Ascending aorta (tissue), 2 donors: ENCODE measurements at regions of chr7 and their contacts with region 1.

Region 1: GRCh38 chr7:138002096-138002827 is 376 bp upstream of the CREB3L2 start:
- DNase-seq: peak; percentile 98 to 100
- H3K4me3 ChIP-seq: peak overlapping the region; percentile 71 to 73
- H3K27ac ChIP-seq: peak overlapping the region; percentile 83 to 95
- H3K4me1 ChIP-seq: peaks cover 0 to 11% of the 10 kb centered on the region in 2 donors
- H3K27me3 ChIP-seq: no peaks in the 10 kb centered on the region
- CTCF ChIP-seq: peak; percentile 85 to 95 (median 92)

Region 2: DNA sequence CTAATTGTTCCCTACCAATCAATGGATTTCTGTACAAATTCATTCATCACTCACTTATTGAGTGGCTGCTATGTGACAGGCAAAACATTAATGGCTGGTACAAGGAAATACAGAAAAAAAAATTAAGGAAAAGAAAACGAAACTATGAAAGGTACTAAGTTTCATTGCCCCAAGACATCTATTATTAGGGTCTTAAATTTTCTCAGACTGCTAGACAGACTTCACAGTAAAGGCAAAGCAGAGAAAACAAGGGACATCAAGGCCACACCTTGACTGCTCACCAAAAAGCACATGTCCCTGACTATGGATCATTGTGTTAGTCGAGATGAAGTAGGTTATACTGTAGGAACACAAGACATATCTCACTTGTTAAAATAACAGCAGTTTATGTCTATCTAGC is 192.0 kb before region 1 on chr7:
- intact Hi-C with region 1: no loop called
- DNase-seq: no peak
- H3K4me3 ChIP-seq: no peak overlapping the region
- H3K27ac ChIP-seq: no peak overlapping the region
- H3K4me1 ChIP-seq: no peaks in the 10 kb centered on the region
- H3K27me3 ChIP-seq: no peaks in the 10 kb centered on the region
- CTCF ChIP-seq: no peak

Region 3: DNA sequence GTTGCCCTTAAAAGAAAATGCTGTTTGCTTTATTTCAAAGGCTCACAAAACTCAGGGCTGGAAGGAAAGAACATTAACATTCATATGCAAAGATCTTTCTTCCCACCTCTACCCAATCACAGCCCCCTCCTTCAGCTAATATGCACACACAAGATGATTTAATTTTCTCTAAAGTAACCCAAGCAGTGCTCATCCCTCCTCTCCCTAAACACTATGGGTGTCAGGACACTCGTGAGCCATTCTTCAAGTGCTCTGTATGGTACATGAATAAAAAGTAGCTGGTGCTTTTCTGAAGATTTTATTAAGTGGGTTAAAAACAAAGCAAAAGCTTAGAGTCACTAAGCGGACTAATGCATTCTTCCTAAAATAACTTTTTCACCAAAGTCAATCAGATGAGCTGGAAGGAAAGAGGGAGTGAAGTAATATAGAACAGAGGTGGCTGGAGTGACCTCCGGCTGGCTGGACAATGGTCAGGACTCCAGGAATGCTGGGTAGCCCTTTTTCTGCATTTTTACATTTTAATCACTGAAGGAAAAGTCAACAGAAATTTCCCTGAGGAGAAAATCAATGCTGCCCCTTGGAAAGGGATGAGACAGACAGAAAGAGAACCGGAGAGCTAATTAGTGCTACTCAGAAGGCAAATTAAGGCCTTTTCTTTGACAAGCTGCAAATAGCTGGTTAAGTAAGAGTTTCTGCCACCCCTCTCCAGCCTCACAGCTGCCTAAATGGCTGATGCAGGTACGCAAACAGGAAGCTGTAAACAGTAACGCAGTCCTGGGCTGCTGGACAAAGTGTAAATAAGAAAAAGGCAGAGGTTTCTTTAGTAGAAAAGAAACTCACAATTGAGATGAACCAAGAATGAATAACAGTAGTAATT is 162.1 kb before region 1 on chr7:
- intact Hi-C with region 1: loop called (anchors 5 kb)
- DNase-seq: no peak
- H3K4me3 ChIP-seq: no peak overlapping the region
- H3K27ac ChIP-seq: peak overlapping the region; percentile 3 to 56
- H3K4me1 ChIP-seq: peaks cover 7 to 28% of the 10 kb centered on the region in 2 donors
- H3K27me3 ChIP-seq: no peaks in the 10 kb centered on the region
- CTCF ChIP-seq: no peak

Region 4: GRCh38 chr7:137909037-137909436 is 93.2 kb before region 1 on chr7:
- intact Hi-C with region 1: loop called (anchors 1 kb)
- DNase-seq: peak in 1 of 2 donors; percentile 84
- H3K4me3 ChIP-seq: peak overlapping the region in 1 of 2 donors; percentile 11
- H3K27ac ChIP-seq: peak overlapping the region; percentile 78 to 87
- H3K4me1 ChIP-seq: peaks cover 0 to 20% of the 10 kb centered on the region in 2 donors
- H3K27me3 ChIP-seq: no peaks in the 10 kb centered on the region
- CTCF ChIP-seq: peak in 2 of 3 experiments; percentile 18 to 37

Region 5: GRCh38 chr7:137933270-137934017 is 68.8 kb before region 1 on chr7:
- intact Hi-C with region 1: loop called (anchors 2 kb)
- DNase-seq: peak in 1 of 2 donors; percentile 86
- H3K4me3 ChIP-seq: peak overlapping the region in 1 of 2 donors; percentile 11
- H3K27ac ChIP-seq: peak overlapping the region; percentile 77 to 79
- H3K4me1 ChIP-seq: peaks cover 13 to 62% of the 10 kb centered on the region in 2 donors
- H3K27me3 ChIP-seq: no peaks in the 10 kb centered on the region
- CTCF ChIP-seq: no peak

Region 6: DNA sequence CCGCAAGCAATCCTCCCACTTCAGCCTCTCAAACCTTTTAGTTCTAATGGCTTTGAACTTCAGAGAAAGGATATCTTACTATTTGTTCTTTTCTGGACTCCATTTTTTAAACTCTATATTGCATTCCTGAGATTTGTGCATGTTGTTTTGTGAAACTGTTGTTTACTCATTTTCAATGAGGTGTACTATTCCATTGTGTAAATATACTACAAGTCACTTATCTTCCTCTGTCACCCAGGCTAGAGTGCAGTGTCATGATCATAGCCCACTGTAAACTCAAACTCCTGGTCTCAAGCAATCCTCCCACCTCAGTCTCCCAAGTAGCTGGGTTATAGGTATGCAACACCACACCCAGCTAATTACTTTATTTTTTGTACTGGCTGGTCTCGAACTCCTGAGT is 42.6 kb after region 1 on chr7:
- intact Hi-C with region 1: no loop called
- DNase-seq: no peak
- H3K4me3 ChIP-seq: no peak overlapping the region
- H3K27ac ChIP-seq: no peak overlapping the region
- H3K4me1 ChIP-seq: no peaks in the 10 kb centered on the region
- H3K27me3 ChIP-seq: no peaks in the 10 kb centered on the region
- CTCF ChIP-seq: no peak

Region 7: DNA sequence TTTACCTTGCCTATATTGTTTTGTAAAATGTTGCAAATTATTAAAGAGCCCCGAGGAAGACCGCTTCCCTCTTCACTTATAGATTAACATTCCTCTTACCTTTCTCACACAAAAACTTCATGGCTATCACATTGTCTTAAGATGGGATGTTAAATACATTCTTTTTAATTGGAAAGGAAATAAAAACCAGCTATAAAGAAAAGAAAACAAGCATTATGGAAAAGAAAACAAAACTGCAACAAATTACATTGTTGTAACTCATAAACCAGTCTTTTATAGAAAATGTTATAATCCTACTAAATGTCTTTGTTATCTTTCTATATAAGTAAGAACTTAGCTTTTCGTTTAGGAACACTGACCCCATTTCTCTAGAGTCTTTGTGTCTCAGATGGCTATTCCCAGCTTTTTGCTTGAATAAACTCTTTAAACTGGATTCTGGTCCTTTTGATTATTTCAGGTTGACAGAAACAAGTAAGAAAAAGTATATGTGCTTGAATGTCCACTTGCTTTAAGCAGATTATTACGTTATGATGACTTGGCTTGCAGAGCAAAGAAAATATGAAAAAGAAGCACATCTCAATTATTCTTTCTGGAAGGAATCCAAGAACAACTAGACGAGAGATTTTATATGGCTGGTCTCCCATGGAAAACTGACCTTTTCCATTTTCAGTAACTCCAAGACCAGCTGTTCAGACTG is 202.2 kb after region 1 on chr7:
- intact Hi-C with region 1: no loop called
- DNase-seq: no peak
- H3K4me3 ChIP-seq: no peak overlapping the region
- H3K27ac ChIP-seq: no peak overlapping the region
- H3K4me1 ChIP-seq: no peaks in the 10 kb centered on the region
- H3K27me3 ChIP-seq: no peaks in the 10 kb centered on the region
- CTCF ChIP-seq: no peak

Region 8: DNA sequence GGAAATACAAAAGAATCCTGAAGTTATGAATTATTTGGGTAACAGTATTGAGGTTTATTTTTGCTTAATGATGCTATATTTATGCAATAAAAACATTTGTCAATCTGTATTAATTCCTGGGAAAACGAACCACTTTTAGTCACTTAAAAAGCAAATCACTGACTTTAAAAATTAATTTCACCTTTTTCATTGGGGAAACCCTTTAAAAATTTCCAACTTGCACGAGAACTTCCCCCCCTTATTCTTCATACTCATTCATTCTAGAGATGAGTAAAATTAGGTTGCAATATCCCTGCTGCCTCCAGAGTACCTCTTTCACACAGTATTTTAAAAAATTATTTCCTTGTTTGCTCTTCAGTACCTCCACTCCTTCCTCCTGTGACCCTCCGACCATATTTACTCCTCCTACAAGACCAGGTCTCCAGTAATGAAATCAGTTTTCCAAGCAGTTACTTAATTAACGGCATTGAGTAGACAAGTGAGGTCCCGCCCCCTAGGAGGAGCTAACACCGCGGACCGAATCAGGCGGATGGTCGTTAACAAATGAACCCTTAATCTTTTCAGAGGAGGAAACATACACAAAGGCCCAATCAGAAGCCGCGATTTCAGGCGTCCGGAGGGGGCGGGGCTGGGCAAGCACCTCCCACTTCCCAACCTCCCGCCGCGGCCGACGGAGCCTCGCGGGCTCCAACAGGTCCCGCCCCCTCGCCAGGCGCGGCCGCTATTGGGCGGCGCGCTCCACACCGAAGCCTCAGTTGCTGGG is 457.3 kb after region 1 on chr7:
- intact Hi-C with region 1: loop called (anchors 10 kb)
- DNase-seq: peak; percentile 93 to 99
- H3K4me3 ChIP-seq: peak overlapping the region; percentile 57 to 85
- H3K27ac ChIP-seq: no peak overlapping the region
- H3K4me1 ChIP-seq: peaks cover 3 to 5% of the 10 kb centered on the region in 2 donors
- H3K27me3 ChIP-seq: no peaks in the 10 kb centered on the region
- CTCF ChIP-seq: peak in 1 of 3 experiments; percentile 19

Region 9: DNA sequence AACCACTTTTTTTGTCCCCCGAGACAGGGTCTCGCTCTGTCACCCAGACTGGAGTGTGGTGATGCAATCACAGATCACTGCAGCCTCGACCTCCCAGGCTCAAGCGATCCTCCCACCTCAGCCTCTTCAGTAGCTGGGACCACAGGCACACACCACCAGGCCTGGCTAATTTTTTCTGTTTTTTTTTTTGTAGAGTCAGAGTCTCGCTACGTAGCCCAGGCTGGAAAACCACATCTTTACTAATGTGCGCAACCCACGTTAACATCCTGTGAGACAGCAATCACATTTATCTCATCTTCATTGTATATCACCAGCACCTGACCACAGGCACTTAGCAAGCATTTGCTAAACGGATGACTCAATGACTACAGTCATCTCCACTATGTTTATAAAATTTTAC is 873.5 kb after region 1 on chr7:
- intact Hi-C with region 1: no loop called
- DNase-seq: no peak
- H3K4me3 ChIP-seq: no peak overlapping the region
- H3K27ac ChIP-seq: no peak overlapping the region
- H3K4me1 ChIP-seq: no peaks in the 10 kb centered on the region
- H3K27me3 ChIP-seq: no peaks in the 10 kb centered on the region
- CTCF ChIP-seq: no peak